MCF 10A (cell line): ENCODE measurements at regions of chr20 and their contacts with region 1.

Region 1: GRCh38 chr20:3767427-3768341 is at the start of gene ADISSP:
- DNase-seq: peak; percentile 98
- H3K4me3 Mint-ChIP-seq: peak within 1 kb of the TSS; percentile 84
- H3K27ac Mint-ChIP-seq: peak within 1 kb of the TSS; percentile 91
- H3K4me1 Mint-ChIP-seq: peaks cover 18% of the 10 kb centered on the region
- H3K27me3 Mint-ChIP-seq: no peaks in the 10 kb centered on the region
- CTCF ChIP-seq: no peak
- total RNA-seq, gene ADISSP: 37.8 and 58.8 TPM in 2 replicates

Region 2: GRCh38 chr20:3716195-3716834 is 51.4 kb before region 1 on chr20:
- CTCF ChIA-PET with region 1: interaction called, 4 read pairs
- POLR2A ChIA-PET with region 1: interaction called, 6 read pairs
- intact Hi-C with region 1: loop called (anchors 2 kb)
- DNase-seq: peak; percentile 59
- H3K4me3 Mint-ChIP-seq: no peak overlapping the region
- H3K27ac Mint-ChIP-seq: no peak overlapping the region
- H3K4me1 Mint-ChIP-seq: no peaks in the 10 kb centered on the region
- H3K27me3 Mint-ChIP-seq: peaks cover 18% of the 10 kb centered on the region
- CTCF ChIP-seq: peak; percentile 67

Region 3: GRCh38 chr20:3781153-3781910 is 13.6 kb after region 1 on chr20 and contains the start of gene SPEF1:
- CTCF ChIA-PET with region 1: interaction called, 23 read pairs
- POLR2A ChIA-PET with region 1: interaction called, 61 read pairs
- intact Hi-C with region 1: no loop called
- DNase-seq: peak; percentile 95
- H3K4me3 Mint-ChIP-seq: peak within 1 kb of the TSS; percentile 73
- H3K27ac Mint-ChIP-seq: peak within 1 kb of the TSS; percentile 87
- H3K4me1 Mint-ChIP-seq: peaks cover 34% of the 10 kb centered on the region
- H3K27me3 Mint-ChIP-seq: no peaks in the 10 kb centered on the region
- CTCF ChIP-seq: peak; percentile 26
- total RNA-seq, gene SPEF1: 0.32 TPM in 1 of 2 replicates, not detected in the other

Region 4: GRCh38 chr20:3795511-3796468 is 28.1 kb after region 1 on chr20 and contains the start of gene CDC25B:
- CTCF ChIA-PET with region 1: no interaction called
- POLR2A ChIA-PET with region 1: interaction called, 11 read pairs
- intact Hi-C with region 1: no loop called
- DNase-seq: peak; percentile 95
- H3K4me3 Mint-ChIP-seq: peak within 1 kb of the TSS; percentile 97
- H3K27ac Mint-ChIP-seq: peak within 1 kb of the TSS; percentile 94
- H3K4me1 Mint-ChIP-seq: peaks cover 25% of the 10 kb centered on the region
- H3K27me3 Mint-ChIP-seq: no peaks in the 10 kb centered on the region
- CTCF ChIP-seq: peak; percentile 45
- total RNA-seq, gene CDC25B: 134 and 137 TPM in 2 replicates

Region 5: GRCh38 chr20:3846740-3847428 is 79.2 kb after region 1 on chr20 and contains the start of gene MAVS:
- CTCF ChIA-PET with region 1: interaction called, 4 read pairs
- POLR2A ChIA-PET with region 1: interaction called, 22 read pairs
- intact Hi-C with region 1: no loop called
- DNase-seq: peak; percentile 86
- H3K4me3 Mint-ChIP-seq: peak within 1 kb of the TSS; percentile 83
- H3K27ac Mint-ChIP-seq: peak within 1 kb of the TSS; percentile 83
- H3K4me1 Mint-ChIP-seq: peaks cover 13% of the 10 kb centered on the region
- H3K27me3 Mint-ChIP-seq: no peaks in the 10 kb centered on the region
- CTCF ChIP-seq: no peak
- total RNA-seq, gene MAVS: 31.7 and 39.7 TPM in 2 replicates